K562 (cell line): ENCODE measurements at regions of chr11 and their contacts with region 1.

Region 1: GRCh38 chr11:123261345-123262106 is 66.5 kb upstream of the CLMP start:
- DNase-seq: peak; percentile 77 to 84 (median 80)
- ATAC-seq: peak; percentile 100
- H3K4me3 ChIP-seq: no peak overlapping the region
- H3K27ac ChIP-seq: no peak overlapping the region
- H3K4me1 ChIP-seq: no peaks in the 10 kb centered on the region
- H3K27me3 ChIP-seq: peaks cover 0 to 25% of the 10 kb centered on the region in 2 experiments; a peak in 2 of 5 replicates
- CTCF ChIP-seq: peak; percentile 79 to 91 (median 81)
- EP300 ChIP-seq: no peak
- POLR2A ChIP-seq: no peak
- RAD21 ChIP-seq: peak in 1 of 2 experiments; percentile 55; a peak in 2 of 4 replicates

Region 2: DNA sequence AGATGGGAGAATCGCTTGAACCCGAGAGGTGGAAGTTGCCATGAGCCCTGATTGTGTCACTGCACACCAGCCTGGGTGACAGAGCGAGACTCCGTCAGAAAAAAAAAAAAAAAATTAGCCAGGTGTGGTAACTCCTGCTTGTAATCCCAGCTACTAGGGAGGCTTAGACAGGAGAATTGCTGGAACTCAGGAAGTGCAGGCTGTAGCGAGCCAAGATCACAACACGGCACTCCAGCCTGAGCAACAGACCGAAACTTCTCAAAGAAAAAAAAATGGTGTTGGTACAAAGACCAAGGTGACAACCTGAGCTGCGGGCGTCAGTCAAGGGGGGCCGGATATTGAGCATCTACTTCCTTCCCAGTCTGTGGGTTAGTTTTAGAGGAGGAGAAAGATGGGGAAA is 151.2 kb before region 1 on chr11:
- CTCF ChIA-PET with region 1: interaction called, 3 read pairs
- POLR2A ChIA-PET with region 1: interaction called, 4 read pairs
- in situ Hi-C with region 1: no loop called
- intact Hi-C with region 1: loop called (anchors 5 kb)
- DNase-seq: no peak
- ATAC-seq: no peak
- H3K4me3 ChIP-seq: no peak overlapping the region
- H3K27ac ChIP-seq: no peak overlapping the region
- H3K4me1 ChIP-seq: no peaks in the 10 kb centered on the region; a peak in 1 of 5 replicates
- H3K27me3 ChIP-seq: peaks cover 21 to 34% of the 10 kb centered on the region in 2 experiments; a peak in 3 of 5 replicates
- CTCF ChIP-seq: no peak
- EP300 ChIP-seq: no peak
- POLR2A ChIP-seq: no peak
- RAD21 ChIP-seq: no peak

Region 3: GRCh38 chr11:123316003-123316402 is 54.5 kb after region 1 on chr11:
- CTCF ChIA-PET with region 1: no interaction called
- POLR2A ChIA-PET with region 1: no interaction called
- in situ Hi-C with region 1: no loop called
- intact Hi-C with region 1: no loop called
- DNase-seq: no peak
- ATAC-seq: no peak
- H3K4me3 ChIP-seq: no peak overlapping the region
- H3K27ac ChIP-seq: no peak overlapping the region
- H3K4me1 ChIP-seq: no peaks in the 10 kb centered on the region
- H3K27me3 ChIP-seq: peaks cover 3 to 4% of the 10 kb centered on the region in 2 experiments; a peak in 2 of 5 replicates
- CTCF ChIP-seq: no peak
- EP300 ChIP-seq: no peak
- POLR2A ChIP-seq: no peak
- RAD21 ChIP-seq: no peak